Activated B cell treated with CpG ODN at 0.5 μM for 24 hours (primary cell): ENCODE measurements at regions of chr20 and their contacts with region 1.

Region 1: GRCh38 chr20:37575884-37576283 is 48.2 kb upstream of the BLCAP start:
- DNase-seq: no peak
- ATAC-seq: peak; percentile 70
- H3K4me3 Mint-ChIP-seq: no peak overlapping the region
- H3K27ac Mint-ChIP-seq: no peak overlapping the region
- H3K4me1 Mint-ChIP-seq: peaks cover 28% of the 10 kb centered on the region
- H3K27me3 Mint-ChIP-seq: peaks cover 12% of the 10 kb centered on the region
- CTCF ChIP-seq: no peak

Region 2: DNA sequence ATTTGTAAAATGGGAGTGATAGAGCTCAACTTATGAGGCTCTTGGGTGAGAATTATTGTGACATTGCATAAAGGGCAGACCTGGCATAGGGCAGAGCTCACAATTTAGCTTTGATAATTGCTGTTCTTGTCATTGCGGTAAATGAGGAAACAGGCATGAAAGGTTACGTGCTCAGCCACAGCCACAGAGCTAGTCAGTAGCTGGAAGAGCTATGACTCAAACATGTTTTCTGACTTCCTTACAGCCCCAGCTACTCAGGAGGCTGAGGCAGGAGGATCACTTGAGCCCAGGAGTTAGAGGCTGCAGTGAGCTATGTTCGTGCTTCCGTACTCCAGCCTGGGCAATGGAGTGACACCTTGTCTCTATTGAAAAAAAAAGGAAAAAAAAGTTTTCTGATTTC is 310.7 kb before region 1 on chr20:
- CTCF ChIA-PET with region 1: no interaction called
- POLR2A ChIA-PET with region 1: no interaction called
- intact Hi-C with region 1: no loop called
- DNase-seq: no peak
- ATAC-seq: peak; percentile 89
- H3K4me3 Mint-ChIP-seq: no peak overlapping the region
- H3K27ac Mint-ChIP-seq: no peak overlapping the region
- H3K4me1 Mint-ChIP-seq: peaks cover 13% of the 10 kb centered on the region
- H3K27me3 Mint-ChIP-seq: peaks cover 5% of the 10 kb centered on the region
- CTCF ChIP-seq: no peak

Region 3: DNA sequence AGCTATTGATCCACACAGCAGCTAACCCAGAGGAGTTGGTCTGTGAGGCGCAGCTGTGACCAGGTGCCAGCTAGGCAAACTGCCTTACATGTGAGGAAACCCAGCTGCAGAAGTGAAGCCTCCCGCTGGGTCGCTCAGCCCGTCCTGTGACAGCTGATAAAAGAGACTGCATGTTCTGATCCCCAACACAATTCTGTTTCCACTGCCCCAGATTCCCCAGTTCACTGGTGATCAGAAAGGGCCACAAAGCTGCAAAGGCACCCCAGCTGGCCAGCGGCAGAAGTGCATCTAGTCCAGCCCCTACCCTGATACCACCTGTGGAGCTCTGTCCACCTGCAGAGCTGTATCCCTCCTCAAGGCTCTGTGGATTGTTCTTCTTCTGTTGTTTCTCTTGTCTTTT is 182.4 kb after region 1 on chr20:
- CTCF ChIA-PET with region 1: no interaction called
- POLR2A ChIA-PET with region 1: no interaction called
- intact Hi-C with region 1: loop called (anchors 10 kb)
- DNase-seq: no peak
- ATAC-seq: no peak
- H3K4me3 Mint-ChIP-seq: no peak overlapping the region
- H3K27ac Mint-ChIP-seq: no peak overlapping the region
- H3K4me1 Mint-ChIP-seq: peaks cover 20% of the 10 kb centered on the region
- H3K27me3 Mint-ChIP-seq: no peaks in the 10 kb centered on the region
- CTCF ChIP-seq: no peak